ENCODE measurements at regions of chr14 and their contacts with region 1.

Region 1: DNA sequence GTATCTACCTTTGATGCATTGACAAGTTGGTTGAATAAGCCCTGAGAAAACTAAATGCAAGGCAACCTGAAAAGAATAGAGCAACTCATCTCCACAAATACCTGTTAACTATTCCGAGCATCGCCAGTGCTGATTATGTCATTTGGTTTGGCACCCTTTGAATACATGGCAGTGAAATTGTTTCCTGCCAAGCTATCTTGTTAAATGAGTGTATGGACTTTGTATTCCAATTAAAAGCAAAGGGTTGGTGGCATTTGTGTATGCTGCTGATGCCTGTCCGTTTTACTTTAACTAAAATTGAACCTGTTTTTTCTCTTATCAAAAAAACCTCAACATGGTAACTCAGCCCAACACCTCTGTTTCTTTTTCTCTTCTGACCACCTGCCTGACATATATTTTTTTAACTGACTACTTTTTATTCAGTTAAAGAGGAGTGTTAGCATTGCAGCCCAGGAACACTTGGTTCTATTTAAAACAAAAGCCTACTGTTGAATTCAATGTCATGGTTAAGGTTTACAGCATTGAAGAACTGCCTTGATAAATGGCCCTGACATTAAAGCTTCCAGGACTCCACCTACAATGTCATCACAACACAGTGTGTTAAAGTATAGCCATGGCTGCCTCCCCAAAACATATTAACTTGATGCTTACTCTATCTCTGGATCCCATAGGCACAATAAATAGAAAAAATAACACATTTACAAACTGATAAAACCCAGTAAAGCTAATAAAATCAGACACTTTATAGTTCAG is 838.3 kb upstream of the NOVA1 start:
- DNase-seq: no peak
- H3K4me3 ChIP-seq: no peak overlapping the region
- H3K27ac ChIP-seq: no peak overlapping the region
- H3K4me1 ChIP-seq: no peaks in the 10 kb centered on the region
- H3K27me3 ChIP-seq: no peaks in the 10 kb centered on the region
- CTCF ChIP-seq: no peak

Region 2: GRCh38 chr14:27203219-27203618 is 232.9 kb before region 1 on chr14:
- CTCF ChIA-PET with region 1: no interaction called
- POLR2A ChIA-PET with region 1: no interaction called
- intact Hi-C with region 1: no loop called
- DNase-seq: no peak
- H3K4me3 ChIP-seq: no peak overlapping the region
- H3K27ac ChIP-seq: no peak overlapping the region
- H3K4me1 ChIP-seq: no peaks in the 10 kb centered on the region
- H3K27me3 ChIP-seq: no peaks in the 10 kb centered on the region
- CTCF ChIP-seq: no peak

Region 3: GRCh38 chr14:28783664-28784063 is 1347.6 kb after region 1 on chr14:
- CTCF ChIA-PET with region 1: no interaction called
- POLR2A ChIA-PET with region 1: interaction called, 29 read pairs
- intact Hi-C with region 1: no loop called
- DNase-seq: no peak
- H3K4me3 ChIP-seq: no peak overlapping the region
- H3K27ac ChIP-seq: no peak overlapping the region
- H3K4me1 ChIP-seq: no peaks in the 10 kb centered on the region
- H3K27me3 ChIP-seq: no peaks in the 10 kb centered on the region
- CTCF ChIP-seq: no peak